ENCODE measurements at regions of chr22 and their contacts with region 1.

Region 1: GRCh38 chr22:41780746-41781505 is 19.6 kb upstream of the CCDC134 start:
- DNase-seq: no peak
- H3K4me3 ChIP-seq: no peak overlapping the region
- H3K27ac ChIP-seq: no peak overlapping the region
- H3K4me1 ChIP-seq: no peaks in the 10 kb centered on the region; a peak in 1 of 7 replicates
- H3K27me3 ChIP-seq: no peaks in the 10 kb centered on the region; a peak in 2 of 7 replicates
- CTCF ChIP-seq: no peak
- EP300 ChIP-seq: no peak
- POLR2A ChIP-seq: no peak
- RAD21 ChIP-seq: no peak

Region 2: DNA sequence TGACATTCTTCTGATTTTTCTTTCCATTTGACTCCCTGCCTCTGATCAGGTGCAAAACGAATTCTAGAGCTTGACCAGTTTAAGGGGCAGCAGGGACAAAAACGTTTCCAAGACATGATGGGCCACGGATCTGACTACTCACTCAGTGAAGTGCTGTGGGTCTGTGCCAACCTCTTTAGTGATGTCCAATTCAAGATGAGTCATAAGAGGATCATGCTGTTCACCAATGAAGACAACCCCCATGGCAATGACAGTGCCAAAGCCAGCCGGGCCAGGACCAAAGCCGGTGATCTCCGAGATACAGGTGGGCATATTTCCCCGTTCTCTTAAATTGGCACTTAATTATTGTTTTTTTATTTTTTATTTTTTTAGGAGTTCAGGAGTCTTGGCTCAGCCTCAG is 144.5 kb before region 1 on chr22:
- CTCF ChIA-PET with region 1: no interaction called
- POLR2A ChIA-PET with region 1: no interaction called
- DNase-seq: no peak
- H3K4me3 ChIP-seq: no peak overlapping the region
- H3K27ac ChIP-seq: no peak overlapping the region
- H3K4me1 ChIP-seq: no peaks in the 10 kb centered on the region
- H3K27me3 ChIP-seq: no peaks in the 10 kb centered on the region
- CTCF ChIP-seq: no peak
- EP300 ChIP-seq: no peak
- POLR2A ChIP-seq: no peak
- RAD21 ChIP-seq: no peak

Region 3: DNA sequence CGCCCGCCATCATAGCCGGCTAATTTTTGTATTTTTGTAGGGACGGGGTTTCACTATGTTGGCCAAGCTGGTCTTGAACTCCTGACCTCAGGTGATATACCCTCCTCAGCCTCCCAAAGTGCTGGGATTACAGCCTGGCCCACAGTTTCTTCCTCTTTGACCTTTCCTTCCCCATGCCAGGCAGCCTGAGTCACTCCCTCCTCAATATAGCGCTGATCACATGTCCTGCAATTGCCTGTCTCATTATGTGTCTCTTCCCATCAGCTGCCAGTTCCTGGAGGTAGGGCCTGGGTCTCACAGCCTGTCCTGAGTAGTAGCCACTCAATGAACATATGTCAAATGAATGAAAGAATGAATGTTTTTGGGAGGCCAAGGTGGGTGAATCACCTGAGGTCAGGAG is 23.4 kb before region 1 on chr22:
- CTCF ChIA-PET with region 1: interaction called, 19 read pairs
- POLR2A ChIA-PET with region 1: interaction called, 3 read pairs
- DNase-seq: no peak
- H3K4me3 ChIP-seq: no peak overlapping the region
- H3K27ac ChIP-seq: no peak overlapping the region
- H3K4me1 ChIP-seq: peaks cover 0 to 7% (median 4%) of the 10 kb centered on the region in 4 experiments; a peak in 5 of 7 replicates
- H3K27me3 ChIP-seq: no peaks in the 10 kb centered on the region; a peak in 1 of 7 replicates
- CTCF ChIP-seq: no peak
- EP300 ChIP-seq: no peak
- POLR2A ChIP-seq: no peak
- RAD21 ChIP-seq: no peak

Region 4: GRCh38 chr22:41762980-41763779 is 17.7 kb before region 1 on chr22:
- CTCF ChIA-PET with region 1: interaction called, 22 read pairs
- POLR2A ChIA-PET with region 1: interaction called, 3 read pairs
- DNase-seq: peak; percentile 67 to 94
- H3K4me3 ChIP-seq: no peak overlapping the region
- H3K27ac ChIP-seq: no peak overlapping the region
- H3K4me1 ChIP-seq: no peaks in the 10 kb centered on the region
- H3K27me3 ChIP-seq: no peaks in the 10 kb centered on the region
- CTCF ChIP-seq: peak; percentile 71 to 94 (median 84)
- EP300 ChIP-seq: no peak
- POLR2A ChIP-seq: no peak
- RAD21 ChIP-seq: peak; percentile 42 to 64; a peak in 3 of 4 replicates

Region 5: DNA sequence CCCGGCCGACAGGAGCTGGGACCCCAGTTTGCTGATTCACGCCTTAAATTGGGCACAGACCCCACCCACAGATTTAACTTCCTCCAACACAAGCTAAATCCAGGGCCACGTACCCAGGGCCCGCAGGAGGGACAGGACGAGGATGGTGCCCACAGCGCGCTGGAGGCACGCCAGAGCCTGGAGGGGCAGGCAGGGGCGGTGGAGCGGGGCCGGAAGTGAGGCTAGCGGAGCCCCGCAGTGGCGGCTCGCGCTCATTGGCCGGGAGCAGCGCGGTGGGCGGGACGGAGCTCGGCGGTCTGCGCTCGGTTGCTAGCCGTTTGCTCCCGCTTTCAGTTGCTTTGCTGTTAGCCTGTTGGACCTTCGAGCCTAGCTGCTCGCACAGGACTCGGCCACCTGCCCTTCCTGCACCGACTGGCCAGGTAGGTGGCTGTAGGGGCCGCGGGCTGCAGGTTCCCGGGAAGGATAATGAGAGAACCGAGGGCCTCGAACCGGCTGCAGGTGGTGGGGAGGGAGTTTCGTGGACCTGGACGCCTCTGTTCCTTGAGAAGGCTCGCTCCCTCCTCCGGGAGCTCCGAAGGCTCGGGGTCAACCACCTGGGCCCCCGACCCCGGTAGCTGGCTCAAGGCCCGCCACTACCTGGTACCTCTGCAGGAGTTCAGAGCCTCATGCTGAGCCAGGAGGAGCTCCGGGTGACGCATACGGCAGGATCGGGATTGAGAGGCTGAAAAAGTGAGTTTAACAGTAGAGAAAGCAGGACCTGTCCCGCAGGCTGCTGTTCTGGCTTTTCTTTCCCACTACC is 19.6 kb after region 1 on chr22 and contains the start of gene CCDC134:
- CTCF ChIA-PET with region 1: interaction called, 4 read pairs
- POLR2A ChIA-PET with region 1: interaction called, 30 read pairs
- DNase-seq: peak; percentile 50 to 93
- H3K4me3 ChIP-seq: peak within 1 kb of the TSS; percentile 78 to 91 (median 86)
- H3K27ac ChIP-seq: peak within 1 kb of the TSS; percentile 73
- H3K4me1 ChIP-seq: peaks cover 8 to 15% (median 9%) of the 10 kb centered on the region in 4 experiments
- H3K27me3 ChIP-seq: no peaks in the 10 kb centered on the region
- CTCF ChIP-seq: no peak
- EP300 ChIP-seq: 0 out of 3 replicates have a peak, but pooled peaks of 1 of the 2 experiments have one; percentile 14
- POLR2A ChIP-seq: peak; percentile 83 to 94
- RAD21 ChIP-seq: no peak
- total RNA-seq, gene CCDC134: 20.0 and 21.4 TPM in 2 replicates

Region 6: GRCh38 chr22:41830174-41830573 is 49.2 kb after region 1 on chr22:
- CTCF ChIA-PET with region 1: no interaction called
- POLR2A ChIA-PET with region 1: no interaction called
- DNase-seq: no peak
- H3K4me3 ChIP-seq: no peak overlapping the region
- H3K27ac ChIP-seq: no peak overlapping the region
- H3K4me1 ChIP-seq: peaks cover 0 to 8% (median 2%) of the 10 kb centered on the region in 4 experiments; a peak in 4 of 7 replicates
- H3K27me3 ChIP-seq: no peaks in the 10 kb centered on the region
- CTCF ChIP-seq: peak; percentile 50 to 58 (median 55)
- EP300 ChIP-seq: no peak
- POLR2A ChIP-seq: no peak
- RAD21 ChIP-seq: 0 out of 4 replicates have a peak, but pooled peaks of 1 of the 2 experiments have one; percentile 4

Region 7: GRCh38 chr22:41848468-41848867 is 67.5 kb after region 1 on chr22:
- CTCF ChIA-PET with region 1: no interaction called
- POLR2A ChIA-PET with region 1: no interaction called
- DNase-seq: no peak
- H3K4me3 ChIP-seq: no peak overlapping the region
- H3K27ac ChIP-seq: no peak overlapping the region
- H3K4me1 ChIP-seq: peaks cover 11 to 35% (median 26%) of the 10 kb centered on the region in 4 experiments
- H3K27me3 ChIP-seq: no peaks in the 10 kb centered on the region
- CTCF ChIP-seq: no peak
- EP300 ChIP-seq: no peak
- POLR2A ChIP-seq: no peak
- RAD21 ChIP-seq: no peak

Measured in H1 (cell line).